Cardiac septum (tissue), 1 donor: ENCODE measurements at regions of chr15 and their contacts with region 1.

Region 1: GRCh38 chr15:39491886-39492490 is 88.9 kb upstream of the THBS1 start:
- DNase-seq: no peak

Region 2: DNA sequence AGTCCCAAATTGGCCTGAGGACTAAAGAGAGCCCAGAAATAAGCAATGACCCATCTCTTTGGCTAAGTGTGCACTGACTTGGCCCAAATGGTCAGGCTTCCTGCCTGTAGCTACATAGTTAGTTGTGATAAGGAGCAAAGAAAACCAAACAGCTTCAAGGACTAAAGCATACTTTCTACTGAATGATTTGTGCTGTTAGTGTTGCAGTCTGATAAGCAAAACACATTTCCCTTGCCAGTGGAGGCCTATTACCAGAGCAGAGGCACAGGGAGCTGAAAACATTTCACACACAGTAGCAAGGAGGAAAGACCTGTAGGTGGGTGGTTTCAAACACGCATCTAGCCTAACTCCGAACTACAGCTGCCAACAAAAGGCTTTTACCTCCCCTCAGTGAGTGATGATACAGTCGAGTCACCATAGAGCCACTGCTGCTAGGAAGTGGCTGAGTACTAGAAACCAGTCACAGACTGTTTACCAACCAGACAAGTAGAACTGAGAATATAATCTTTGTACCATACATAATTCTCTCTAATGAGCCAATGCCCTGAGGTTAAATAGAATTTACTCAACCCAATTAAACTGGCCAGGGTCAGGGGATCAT is 133.4 kb before region 1 on chr15:
- intact Hi-C with region 1: loop called (anchors 2 kb)
- DNase-seq: no peak

Region 3: GRCh38 chr15:39438799-39439592 is 53.0 kb before region 1 on chr15:
- intact Hi-C with region 1: loop called (anchors 5 kb)
- DNase-seq: no peak

Region 4: DNA sequence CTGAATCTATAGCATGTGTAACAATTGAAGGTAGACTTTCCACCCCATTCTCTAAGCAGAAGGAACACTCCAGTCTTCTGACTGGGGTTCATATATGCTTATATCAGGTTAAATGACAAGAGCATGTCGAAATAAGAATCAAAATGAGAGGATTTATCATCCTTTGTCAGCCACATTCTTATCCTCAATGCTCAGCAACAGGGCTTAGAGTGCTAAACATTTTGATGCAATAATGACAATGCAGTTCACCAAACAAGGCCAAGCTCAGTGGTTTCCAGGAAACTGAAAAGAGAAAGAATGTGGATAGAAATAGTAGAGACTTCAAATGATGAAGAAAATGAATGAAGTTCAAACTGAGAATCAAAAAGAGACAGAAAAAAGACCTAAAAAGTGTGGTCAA is 212.7 kb after region 1 on chr15:
- intact Hi-C with region 1: no loop called
- DNase-seq: no peak